HEK293 (cell line): ENCODE measurements at regions of chr7 and their contacts with region 1.

Region 1: GRCh38 chr7:98021588-98022351 is 31.8 kb upstream of the OCM2 start:
- H3K4me3 ChIP-seq: no peak overlapping the region
- H3K27ac ChIP-seq: no peak overlapping the region
- H3K4me1 ChIP-seq: no peaks in the 10 kb centered on the region
- CTCF ChIP-seq: peak; percentile 91

Region 2: DNA sequence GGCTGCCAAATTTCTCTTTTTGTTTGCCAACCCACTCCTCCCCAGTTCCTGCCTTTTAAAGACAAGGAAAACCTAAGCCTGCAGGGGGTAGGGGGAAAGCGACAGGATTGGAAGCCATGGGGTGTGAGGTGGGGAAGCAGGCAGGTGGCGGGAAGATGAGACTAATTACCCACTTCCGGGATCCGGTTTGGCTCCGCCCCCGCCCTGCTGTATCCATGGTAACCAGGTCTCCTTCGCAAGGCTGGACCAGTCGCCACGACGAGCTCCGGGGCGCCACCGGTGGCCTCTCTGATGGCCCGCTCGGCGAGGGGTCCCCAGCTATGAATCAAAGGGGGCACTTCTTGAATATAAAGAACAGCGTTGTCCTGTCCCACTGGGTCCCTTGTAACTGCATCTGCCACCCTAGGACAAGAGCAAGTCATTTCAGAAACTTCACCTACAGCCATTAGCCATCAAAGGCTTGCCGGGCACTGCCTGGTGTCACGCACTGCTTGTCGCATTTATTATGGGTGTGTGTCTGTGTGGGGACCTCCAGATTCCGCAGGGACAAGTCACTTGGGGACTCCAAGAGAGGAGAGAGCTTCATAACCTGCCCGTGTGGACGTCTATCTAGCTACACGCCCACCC is 29.5 kb after region 1 on chr7:
- CTCF ChIA-PET with region 1: interaction called, 11 read pairs
- POLR2A ChIA-PET with region 1: no interaction called
- H3K4me3 ChIP-seq: no peak overlapping the region
- H3K27ac ChIP-seq: no peak overlapping the region
- H3K4me1 ChIP-seq: no peaks in the 10 kb centered on the region
- CTCF ChIP-seq: no peak

Region 3: GRCh38 chr7:98106647-98107445 is 85.1 kb after region 1 on chr7 and contains the start of gene LMTK2:
- CTCF ChIA-PET with region 1: interaction called, 16 read pairs
- POLR2A ChIA-PET with region 1: no interaction called
- H3K4me3 ChIP-seq: peak within 1 kb of the TSS; percentile 98
- H3K27ac ChIP-seq: peak within 1 kb of the TSS; percentile 84
- H3K4me1 ChIP-seq: peaks cover 21% of the 10 kb centered on the region
- CTCF ChIP-seq: peak; percentile 97

Region 4: GRCh38 chr7:98149116-98149692 is 127.4 kb after region 1 on chr7:
- CTCF ChIA-PET with region 1: interaction called, 10 read pairs
- POLR2A ChIA-PET with region 1: no interaction called
- H3K4me3 ChIP-seq: no peak overlapping the region
- H3K27ac ChIP-seq: no peak overlapping the region
- H3K4me1 ChIP-seq: no peaks in the 10 kb centered on the region
- CTCF ChIP-seq: no peak

Region 5: DNA sequence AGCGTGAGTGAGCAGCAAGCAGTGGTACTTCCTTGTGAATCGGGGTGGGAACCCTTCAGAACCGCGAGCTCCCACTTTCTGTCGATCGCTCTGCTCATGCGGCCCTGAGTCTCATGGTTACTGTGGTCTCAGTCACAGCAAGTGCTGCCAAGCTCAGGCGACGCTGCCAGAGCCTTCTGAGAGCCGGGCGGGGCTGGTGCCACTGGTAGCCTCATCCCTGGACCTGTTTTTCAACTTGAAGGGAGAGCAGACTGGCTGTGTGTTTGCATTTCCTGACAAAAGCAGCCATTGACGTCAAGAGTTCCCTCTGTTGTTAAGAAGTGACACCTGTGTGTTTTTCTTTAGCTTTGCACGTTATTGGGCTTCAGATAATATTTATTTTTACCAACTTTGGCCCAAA is 156.6 kb after region 1 on chr7:
- CTCF ChIA-PET with region 1: interaction called, 533 read pairs
- POLR2A ChIA-PET with region 1: no interaction called
- H3K4me3 ChIP-seq: no peak overlapping the region
- H3K27ac ChIP-seq: no peak overlapping the region
- H3K4me1 ChIP-seq: no peaks in the 10 kb centered on the region
- CTCF ChIP-seq: no peak